Endothelial cell of umbilical vein (primary cell): ENCODE measurements at regions of chr2 and their contacts with region 1.

Region 1: GRCh38 chr2:39913648-39914461 is 134.8 kb upstream of the THUMPD2 start:
- DNase-seq: peak; percentile 71
- H3K4me3 ChIP-seq: no peak overlapping the region
- H3K27ac ChIP-seq: no peak overlapping the region
- H3K4me1 ChIP-seq: no peaks in the 10 kb centered on the region
- H3K27me3 ChIP-seq: no peaks in the 10 kb centered on the region
- CTCF ChIP-seq: peak; percentile 42 to 67
- POLR2A ChIP-seq: no peak

Region 2: GRCh38 chr2:39723946-39724827 is 189.7 kb before region 1 on chr2:
- CTCF ChIA-PET with region 1: no interaction called
- POLR2A ChIA-PET with region 1: no interaction called
- dilution Hi-C with region 1: no loop called
- intact Hi-C with region 1: no loop called
- DNase-seq: no peak
- H3K4me3 ChIP-seq: no peak overlapping the region
- H3K27ac ChIP-seq: no peak overlapping the region
- H3K4me1 ChIP-seq: peaks cover 6% of the 10 kb centered on the region
- H3K27me3 ChIP-seq: peaks cover 8 to 14% of the 10 kb centered on the region in 2 experiments
- CTCF ChIP-seq: no peak
- POLR2A ChIP-seq: no peak

Region 3: GRCh38 chr2:39865751-39866150 is 48.1 kb before region 1 on chr2:
- CTCF ChIA-PET with region 1: no interaction called
- POLR2A ChIA-PET with region 1: no interaction called
- dilution Hi-C with region 1: no loop called
- intact Hi-C with region 1: no loop called
- DNase-seq: no peak
- H3K4me3 ChIP-seq: no peak overlapping the region
- H3K27ac ChIP-seq: no peak overlapping the region
- H3K4me1 ChIP-seq: no peaks in the 10 kb centered on the region
- H3K27me3 ChIP-seq: no peaks in the 10 kb centered on the region
- CTCF ChIP-seq: no peak
- POLR2A ChIP-seq: no peak

Region 4: DNA sequence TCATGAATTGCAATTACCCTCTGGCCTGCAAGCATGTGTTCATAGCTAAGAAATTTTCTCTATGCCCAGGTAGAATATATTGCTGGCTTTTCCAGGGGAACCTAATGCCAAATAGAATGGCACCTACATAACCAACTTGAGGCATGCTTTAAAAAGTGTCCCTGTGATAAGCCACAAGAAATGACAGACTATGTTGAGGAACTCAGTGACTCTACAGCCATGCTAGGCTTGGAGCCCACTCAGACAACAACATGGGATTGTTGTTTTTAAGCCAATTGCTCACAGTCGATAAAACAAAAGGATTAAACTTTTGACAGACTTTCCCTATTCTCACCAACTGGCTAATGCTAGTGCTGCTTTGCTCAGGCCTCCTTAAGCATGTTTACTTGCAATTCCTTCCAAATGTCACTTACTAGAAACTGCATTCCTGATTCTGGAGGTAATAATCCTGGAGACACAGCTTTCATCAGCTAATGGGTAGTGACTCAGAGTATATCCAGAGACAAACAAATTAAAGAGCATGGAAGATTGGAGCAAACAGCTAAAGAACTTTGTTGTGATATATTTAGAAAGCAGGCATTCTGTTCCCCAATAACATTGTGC is 289.0 kb after region 1 on chr2:
- CTCF ChIA-PET with region 1: interaction called, 4 read pairs
- POLR2A ChIA-PET with region 1: no interaction called
- dilution Hi-C with region 1: no loop called
- intact Hi-C with region 1: loop called (anchors 10 kb)
- DNase-seq: no peak
- H3K4me3 ChIP-seq: no peak overlapping the region
- H3K27ac ChIP-seq: no peak overlapping the region
- H3K4me1 ChIP-seq: no peaks in the 10 kb centered on the region
- H3K27me3 ChIP-seq: no peaks in the 10 kb centered on the region
- CTCF ChIP-seq: no peak
- POLR2A ChIP-seq: no peak

Region 5: DNA sequence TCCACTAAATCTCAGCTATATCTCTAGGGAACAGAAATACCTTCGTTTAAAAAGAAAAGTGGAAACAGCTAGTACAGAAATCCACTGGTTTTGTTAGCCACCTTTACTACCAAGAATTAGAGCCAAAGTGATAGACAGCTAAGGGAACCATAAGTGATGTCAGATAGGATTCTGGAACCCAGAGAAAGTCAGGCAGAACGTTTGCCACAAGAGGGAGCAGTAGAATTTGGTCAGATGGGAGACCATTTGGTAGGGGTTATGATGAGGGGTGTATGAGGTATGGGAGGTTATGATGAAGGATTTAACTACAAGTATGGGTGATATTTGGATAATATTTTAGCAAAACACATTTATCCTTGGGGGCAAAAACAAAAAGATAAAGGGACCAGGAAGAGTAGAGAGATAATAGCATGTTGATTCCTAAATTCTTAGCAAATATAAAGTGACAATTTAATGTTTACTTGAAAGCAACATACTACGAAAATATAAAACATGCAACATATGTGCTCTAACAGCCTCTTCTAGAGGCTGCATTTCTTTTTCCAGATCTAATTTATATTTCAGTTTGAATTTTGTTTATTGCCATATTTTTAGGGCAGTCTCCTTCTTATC is 534.7 kb after region 1 on chr2:
- CTCF ChIA-PET with region 1: interaction called, 42 read pairs
- POLR2A ChIA-PET with region 1: interaction called, 3 read pairs
- dilution Hi-C with region 1: no loop called
- intact Hi-C with region 1: loop called (anchors 2 kb)
- DNase-seq: peak; percentile 42
- H3K4me3 ChIP-seq: no peak overlapping the region
- H3K27ac ChIP-seq: no peak overlapping the region
- H3K4me1 ChIP-seq: peaks cover 10% of the 10 kb centered on the region
- H3K27me3 ChIP-seq: no peaks in the 10 kb centered on the region
- CTCF ChIP-seq: peak; percentile 47 to 59
- POLR2A ChIP-seq: no peak

Region 6: DNA sequence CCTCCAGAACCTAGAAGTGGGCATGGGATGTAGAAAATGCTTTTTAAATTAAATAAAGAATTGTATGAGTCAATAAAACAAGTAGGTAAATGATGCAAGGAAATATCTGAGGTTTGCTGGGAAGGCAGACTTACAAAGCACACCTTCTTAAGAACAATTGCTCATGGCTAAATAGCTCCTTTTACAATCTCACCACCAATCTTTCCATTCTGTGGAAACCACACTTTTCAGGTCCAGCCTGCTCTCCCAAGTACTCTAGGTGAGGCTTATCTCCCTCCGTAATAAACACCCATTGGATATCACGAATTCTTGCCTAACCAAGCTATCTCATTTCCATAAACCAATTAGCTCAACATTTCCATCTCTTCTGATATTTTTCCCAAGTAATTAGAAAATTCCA is 629.5 kb after region 1 on chr2:
- CTCF ChIA-PET with region 1: interaction called, 11 read pairs
- POLR2A ChIA-PET with region 1: no interaction called
- dilution Hi-C with region 1: no loop called
- intact Hi-C with region 1: no loop called
- DNase-seq: no peak
- H3K4me3 ChIP-seq: no peak overlapping the region
- H3K27ac ChIP-seq: no peak overlapping the region
- H3K4me1 ChIP-seq: no peaks in the 10 kb centered on the region
- H3K27me3 ChIP-seq: no peaks in the 10 kb centered on the region
- CTCF ChIP-seq: no peak
- POLR2A ChIP-seq: no peak

Region 7: GRCh38 chr2:41400088-41400665 is 1486.3 kb after region 1 on chr2:
- CTCF ChIA-PET with region 1: interaction called, 76 read pairs
- POLR2A ChIA-PET with region 1: no interaction called
- dilution Hi-C with region 1: no loop called
- intact Hi-C with region 1: loop called (anchors 1 kb)
- DNase-seq: peak; percentile 62
- H3K4me3 ChIP-seq: no peak overlapping the region
- H3K27ac ChIP-seq: no peak overlapping the region
- H3K4me1 ChIP-seq: no peaks in the 10 kb centered on the region
- H3K27me3 ChIP-seq: no peaks in the 10 kb centered on the region
- CTCF ChIP-seq: peak; percentile 32 to 59
- POLR2A ChIP-seq: no peak

Region 8: DNA sequence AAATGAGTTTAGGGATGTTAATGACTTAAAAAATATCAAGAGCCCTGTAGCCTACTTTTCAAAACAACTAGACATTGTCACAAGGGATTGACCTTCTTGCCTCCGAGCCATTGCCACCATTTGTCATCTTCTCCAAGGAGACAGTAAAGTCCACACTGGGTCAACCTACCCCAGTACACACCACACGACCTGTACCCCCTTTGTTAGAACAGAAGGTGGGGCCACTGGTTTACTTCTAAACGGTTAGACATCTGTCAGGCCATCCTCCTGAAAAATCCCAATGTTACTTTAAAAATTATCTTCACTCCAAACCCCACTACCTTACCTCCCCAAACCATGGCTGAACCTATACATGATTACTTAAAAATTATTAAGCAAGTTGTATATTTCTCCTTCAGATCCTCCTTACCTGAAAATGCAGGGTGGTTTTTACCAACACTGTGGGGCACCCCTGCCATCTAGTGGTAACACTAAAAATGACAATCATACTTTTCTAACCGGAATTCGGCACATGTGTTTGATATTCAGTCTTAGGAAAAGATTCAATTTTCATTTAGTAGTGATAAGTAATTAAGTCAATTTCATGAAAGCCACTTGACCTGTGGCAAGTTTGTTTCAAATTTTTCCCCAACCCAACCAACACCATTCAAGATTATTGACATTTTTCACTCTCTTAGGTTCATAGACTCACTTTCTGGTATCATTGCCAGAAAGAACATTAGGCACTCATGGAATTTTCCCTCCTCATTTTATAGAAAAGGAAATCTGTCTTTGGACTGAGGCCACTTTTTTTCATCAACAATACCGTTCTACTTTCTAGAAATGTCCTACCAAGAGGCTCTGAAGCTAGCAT is 1868.7 kb after region 1 on chr2:
- CTCF ChIA-PET with region 1: interaction called, 28 read pairs
- POLR2A ChIA-PET with region 1: no interaction called
- dilution Hi-C with region 1: no loop called
- intact Hi-C with region 1: loop called (anchors 1 kb)
- DNase-seq: peak; percentile 60
- H3K4me3 ChIP-seq: no peak overlapping the region
- H3K27ac ChIP-seq: no peak overlapping the region
- H3K4me1 ChIP-seq: no peaks in the 10 kb centered on the region
- H3K27me3 ChIP-seq: peaks cover 0 to 3% of the 10 kb centered on the region in 2 experiments
- CTCF ChIP-seq: peak; percentile 42 to 52
- POLR2A ChIP-seq: no peak